ENCODE measurements at regions of chr5 and their contacts with region 1.

Region 1: GRCh38 chr5:16427587-16427986 is 38.0 kb downstream of the ZNF622 start:
- DNase-seq: no peak
- H3K4me3 Mint-ChIP-seq: no peak overlapping the region
- H3K27ac Mint-ChIP-seq: no peak overlapping the region
- H3K4me1 Mint-ChIP-seq: no peaks in the 10 kb centered on the region
- H3K27me3 Mint-ChIP-seq: peaks cover 22% of the 10 kb centered on the region
- CTCF ChIP-seq: no peak

Region 2: GRCh38 chr5:16169550-16169949 is 258.0 kb before region 1 on chr5:
- CTCF ChIA-PET with region 1: no interaction called
- POLR2A ChIA-PET with region 1: no interaction called
- intact Hi-C with region 1: no loop called
- DNase-seq: no peak
- H3K4me3 Mint-ChIP-seq: no peak overlapping the region
- H3K27ac Mint-ChIP-seq: no peak overlapping the region
- H3K4me1 Mint-ChIP-seq: no peaks in the 10 kb centered on the region
- H3K27me3 Mint-ChIP-seq: peaks cover 91% of the 10 kb centered on the region
- CTCF ChIP-seq: no peak

Region 3: DNA sequence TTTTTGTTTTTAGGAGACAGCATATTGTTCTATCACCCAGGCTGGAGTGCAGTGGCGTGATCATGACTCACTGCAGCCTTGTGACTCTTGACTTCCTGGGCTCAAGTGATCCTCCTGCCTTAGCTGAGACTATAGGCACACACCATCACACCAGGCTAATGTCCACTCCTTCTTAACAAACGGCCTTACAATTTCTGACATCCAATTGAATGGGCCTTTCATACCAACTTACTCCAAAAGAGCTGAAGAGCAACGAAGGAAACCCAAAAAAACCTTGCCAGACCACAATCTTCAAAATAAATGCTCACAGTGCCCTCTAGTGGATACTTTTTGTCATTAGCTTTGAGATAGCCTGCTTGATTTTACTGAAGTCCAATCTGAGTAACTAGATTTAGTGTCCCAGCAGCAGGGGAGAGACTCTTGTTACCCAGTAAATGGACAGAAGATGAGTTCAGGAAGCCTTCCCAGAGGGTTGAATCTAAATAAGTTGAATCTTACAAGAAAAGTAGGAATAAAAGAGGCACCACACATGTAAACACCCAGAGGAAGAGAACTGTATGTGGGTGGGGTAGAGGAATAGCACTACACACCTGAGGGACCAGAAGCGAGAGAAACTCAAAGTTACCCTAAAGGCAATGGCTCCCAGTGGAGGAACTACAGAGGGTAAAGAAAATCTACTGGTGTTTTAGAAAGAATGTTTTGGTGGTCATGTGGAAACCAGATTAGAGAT is 28.7 kb after region 1 on chr5:
- CTCF ChIA-PET with region 1: interaction called, 13 read pairs
- POLR2A ChIA-PET with region 1: no interaction called
- intact Hi-C with region 1: no loop called
- DNase-seq: peak; percentile 73
- H3K4me3 Mint-ChIP-seq: peak overlapping the region; percentile 13
- H3K27ac Mint-ChIP-seq: peak overlapping the region; percentile 83
- H3K4me1 Mint-ChIP-seq: peaks cover 34% of the 10 kb centered on the region
- H3K27me3 Mint-ChIP-seq: no peaks in the 10 kb centered on the region
- CTCF ChIP-seq: peak; percentile 69